Activated CD4-positive, alpha-beta memory T cell treated with anti-CD3 and anti-CD28 coated beads for 36 hours (primary cell): ENCODE measurements at regions of chr7 and their contacts with region 1.

Region 1: GRCh38 chr7:29189743-29190201 is 4.8 kb upstream of the CHN2 start:
- DNase-seq: peak; percentile 68
- H3K4me3 Mint-ChIP-seq: no peak overlapping the region
- H3K27ac Mint-ChIP-seq: no peak overlapping the region
- H3K4me1 Mint-ChIP-seq: peaks cover 2% of the 10 kb centered on the region
- H3K27me3 Mint-ChIP-seq: peaks cover 17% of the 10 kb centered on the region

Region 2: DNA sequence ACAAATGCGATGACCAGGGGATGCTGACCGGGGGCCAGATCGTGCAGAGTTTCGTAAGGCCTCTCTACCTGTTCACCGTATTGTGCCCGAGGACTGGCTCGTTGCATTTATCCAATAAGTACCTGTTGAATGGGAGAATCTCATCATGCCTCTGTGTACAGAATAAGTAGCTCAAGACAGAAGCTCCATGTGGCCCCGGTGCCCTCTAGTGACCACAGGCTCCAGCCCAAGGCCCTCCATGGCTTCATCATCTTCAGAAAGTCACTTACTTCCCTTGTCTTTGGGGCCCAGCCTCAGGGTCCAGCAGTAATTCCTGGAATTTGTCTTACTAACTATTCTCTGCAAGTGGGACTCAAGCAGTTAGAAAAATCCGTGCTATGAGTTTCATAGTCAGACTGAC is 155.8 kb after region 1 on chr7:
- CTCF ChIA-PET with region 1: interaction called, 12 read pairs
- POLR2A ChIA-PET with region 1: no interaction called
- intact Hi-C with region 1: loop called (anchors 5 kb)
- DNase-seq: peak; percentile 35
- H3K4me3 Mint-ChIP-seq: no peak overlapping the region
- H3K27ac Mint-ChIP-seq: no peak overlapping the region
- H3K4me1 Mint-ChIP-seq: no peaks in the 10 kb centered on the region
- H3K27me3 Mint-ChIP-seq: no peaks in the 10 kb centered on the region